Activated CD8-positive, alpha-beta memory T cell treated with anti-CD3 and anti-CD28 coated beads, Interleukin-2, amount 10 ng/mL, durations not matched to agents 7 days and 5 days (primary cell): ENCODE measurements at regions of chr17 and their contacts with region 1.

Region 1: GRCh38 chr17:20226814-20227482 is 217.8 kb downstream of the SPECC1 start:
- DNase-seq: peak; percentile 83
- ATAC-seq: peak; percentile 97
- H3K4me3 Mint-ChIP-seq: no peak overlapping the region
- H3K27ac Mint-ChIP-seq: no peak overlapping the region
- H3K4me1 Mint-ChIP-seq: peaks cover 8% of the 10 kb centered on the region
- H3K27me3 Mint-ChIP-seq: no peaks in the 10 kb centered on the region

Region 2: GRCh38 chr17:19992803-19993713 is 233.9 kb before region 1 on chr17:
- CTCF ChIA-PET with region 1: interaction called, 16 read pairs
- DNase-seq: peak; percentile 80
- ATAC-seq: peak; percentile 97
- H3K4me3 Mint-ChIP-seq: no peak overlapping the region
- H3K27ac Mint-ChIP-seq: no peak overlapping the region
- H3K4me1 Mint-ChIP-seq: peaks cover 7% of the 10 kb centered on the region
- H3K27me3 Mint-ChIP-seq: peaks cover 17% of the 10 kb centered on the region

Region 3: GRCh38 chr17:20121359-20122253 is 105.3 kb before region 1 on chr17:
- CTCF ChIA-PET with region 1: interaction called, 16 read pairs
- DNase-seq: peak; percentile 73
- ATAC-seq: peak; percentile 64
- H3K4me3 Mint-ChIP-seq: no peak overlapping the region
- H3K27ac Mint-ChIP-seq: no peak overlapping the region
- H3K4me1 Mint-ChIP-seq: peaks cover 2% of the 10 kb centered on the region
- H3K27me3 Mint-ChIP-seq: no peaks in the 10 kb centered on the region

Region 4: GRCh38 chr17:20174588-20175265 is 52.2 kb before region 1 on chr17:
- CTCF ChIA-PET with region 1: no interaction called
- DNase-seq: no peak
- ATAC-seq: no peak
- H3K4me3 Mint-ChIP-seq: no peak overlapping the region
- H3K27ac Mint-ChIP-seq: no peak overlapping the region
- H3K4me1 Mint-ChIP-seq: no peaks in the 10 kb centered on the region
- H3K27me3 Mint-ChIP-seq: peaks cover 3% of the 10 kb centered on the region

Region 5: GRCh38 chr17:20189302-20189701 is 37.6 kb before region 1 on chr17:
- CTCF ChIA-PET with region 1: no interaction called
- DNase-seq: no peak
- ATAC-seq: no peak
- H3K4me3 Mint-ChIP-seq: no peak overlapping the region
- H3K27ac Mint-ChIP-seq: no peak overlapping the region
- H3K4me1 Mint-ChIP-seq: no peaks in the 10 kb centered on the region
- H3K27me3 Mint-ChIP-seq: no peaks in the 10 kb centered on the region

Region 6: GRCh38 chr17:20244671-20245070 is 17.7 kb after region 1 on chr17:
- CTCF ChIA-PET with region 1: interaction called, 10 read pairs
- DNase-seq: no peak
- ATAC-seq: no peak
- H3K4me3 Mint-ChIP-seq: no peak overlapping the region
- H3K27ac Mint-ChIP-seq: no peak overlapping the region
- H3K4me1 Mint-ChIP-seq: peaks cover 2% of the 10 kb centered on the region
- H3K27me3 Mint-ChIP-seq: no peaks in the 10 kb centered on the region

Region 7: DNA sequence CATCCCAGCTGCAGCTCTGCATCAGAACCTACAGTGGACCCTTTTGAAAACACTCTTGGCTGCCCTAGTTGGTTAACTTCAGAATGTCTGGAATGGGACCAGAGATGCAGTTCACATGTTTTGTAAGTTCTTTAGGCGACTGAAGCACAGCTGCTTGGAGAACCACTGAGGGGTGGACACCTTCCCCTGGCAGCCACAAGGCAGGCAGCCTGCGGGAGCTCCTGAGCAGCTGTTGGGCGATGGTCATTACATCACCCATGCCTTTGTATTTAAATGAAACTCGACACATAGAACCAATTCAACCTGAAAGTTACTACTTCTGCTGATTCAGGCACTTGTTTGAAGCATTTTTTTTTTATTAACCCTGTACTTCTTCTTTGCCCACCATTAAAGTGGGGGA is 88.9 kb after region 1 on chr17:
- CTCF ChIA-PET with region 1: interaction called, 45 read pairs
- DNase-seq: no peak
- ATAC-seq: no peak
- H3K4me3 Mint-ChIP-seq: no peak overlapping the region
- H3K27ac Mint-ChIP-seq: no peak overlapping the region
- H3K4me1 Mint-ChIP-seq: peaks cover under 1% of the 10 kb centered on the region
- H3K27me3 Mint-ChIP-seq: no peaks in the 10 kb centered on the region